Right ventricle myocardium inferior (tissue), 1 donor: ENCODE measurements at regions of chr6 and their contacts with region 1.

Region 1: GRCh38 chr6:132161283-132161682 is 210.1 kb upstream of the CCN2 start:
- DNase-seq: no peak
- ATAC-seq: peak; percentile 63

Region 2: DNA sequence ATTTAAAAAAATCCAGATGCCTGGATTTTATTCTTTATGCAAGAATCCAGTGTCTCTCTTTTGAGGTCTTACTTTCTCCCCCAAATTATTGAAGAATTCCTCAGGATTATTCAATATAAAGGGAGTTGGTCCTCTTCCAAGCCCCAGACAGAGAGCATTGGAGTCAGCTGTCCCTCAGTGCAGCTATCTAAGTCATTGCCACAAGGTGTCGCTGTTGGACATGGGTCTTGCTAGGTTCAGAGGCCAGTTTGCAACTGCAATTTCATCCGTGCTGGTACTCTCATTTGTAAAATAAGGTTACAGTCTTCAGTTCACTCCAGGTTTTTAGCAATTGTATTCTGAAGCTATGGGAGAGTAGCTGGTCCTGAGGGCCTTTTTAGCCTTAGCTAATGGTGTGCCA is 237.9 kb before region 1 on chr6:
- intact Hi-C with region 1: loop called (anchors 2 kb)
- DNase-seq: no peak
- ATAC-seq: no peak

Region 3: GRCh38 chr6:131949909-131950766 is 211.1 kb before region 1 on chr6:
- intact Hi-C with region 1: loop called (anchors 10 kb)
- DNase-seq: peak; percentile 81
- ATAC-seq: peak; percentile 83

Region 4: GRCh38 chr6:132218059-132218696 is 56.9 kb after region 1 on chr6:
- intact Hi-C with region 1: loop called (anchors 2 kb)
- DNase-seq: no peak
- ATAC-seq: no peak